Heart left ventricle (tissue), 16 donors: ENCODE measurements at regions of chr21 and their contacts with region 1.

Region 1: DNA sequence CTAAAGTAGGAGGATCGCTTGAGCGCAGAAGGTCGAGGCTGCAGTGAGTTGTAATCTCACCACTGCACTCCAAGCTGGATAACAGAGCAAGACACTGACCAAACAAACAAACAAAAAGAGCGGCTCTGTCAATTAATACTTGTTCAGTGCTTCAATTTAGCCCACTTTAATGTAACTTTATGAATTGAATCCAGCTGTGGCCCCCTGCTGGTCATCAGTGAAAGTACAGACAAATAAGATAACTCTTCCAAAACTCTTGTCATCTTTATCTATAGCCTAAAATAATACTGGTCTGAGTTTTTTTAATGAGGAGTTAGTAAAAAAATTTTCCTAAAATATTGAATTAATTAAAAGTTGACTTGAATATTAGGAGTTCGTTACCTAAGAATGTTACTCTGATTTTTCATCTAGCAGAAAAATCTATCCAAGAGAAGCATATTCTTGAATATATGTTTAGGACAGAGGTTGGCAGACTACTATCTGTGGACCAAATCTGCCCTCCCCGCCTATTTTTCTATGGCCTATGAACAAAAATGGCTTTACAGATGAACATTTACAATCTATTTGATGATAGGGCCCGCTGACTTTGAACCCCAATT is 26.1 kb downstream of the ATP5PF start:
- DNase-seq: peak in 2 of 5 donors; percentile 37 to 39
- ATAC-seq: no peak
- H3K4me3 ChIP-seq: no peak overlapping the region
- H3K27ac ChIP-seq: peak overlapping the region in 1 of 12 donors; percentile 4
- H3K4me1 ChIP-seq: peaks cover 0 to 14% (median 3%) of the 10 kb centered on the region in 12 donors
- H3K27me3 ChIP-seq: no peaks in the 10 kb centered on the region
- CTCF ChIP-seq: peak; percentile 72 to 94 (median 88)
- POLR2A ChIP-seq: no peak

Region 2: GRCh38 chr21:25657140-25657539 is 51.4 kb before region 1 on chr21:
- intact Hi-C with region 1: loop called in 1 of 10 experiments (anchors 10 kb)
- DNase-seq: no peak
- ATAC-seq: no peak
- H3K4me3 ChIP-seq: no peak overlapping the region
- H3K27ac ChIP-seq: no peak overlapping the region
- H3K4me1 ChIP-seq: peaks cover 0 to 13% (median 0%) of the 10 kb centered on the region in 12 donors
- H3K27me3 ChIP-seq: no peaks in the 10 kb centered on the region
- CTCF ChIP-seq: no peak
- POLR2A ChIP-seq: no peak

Region 3: DNA sequence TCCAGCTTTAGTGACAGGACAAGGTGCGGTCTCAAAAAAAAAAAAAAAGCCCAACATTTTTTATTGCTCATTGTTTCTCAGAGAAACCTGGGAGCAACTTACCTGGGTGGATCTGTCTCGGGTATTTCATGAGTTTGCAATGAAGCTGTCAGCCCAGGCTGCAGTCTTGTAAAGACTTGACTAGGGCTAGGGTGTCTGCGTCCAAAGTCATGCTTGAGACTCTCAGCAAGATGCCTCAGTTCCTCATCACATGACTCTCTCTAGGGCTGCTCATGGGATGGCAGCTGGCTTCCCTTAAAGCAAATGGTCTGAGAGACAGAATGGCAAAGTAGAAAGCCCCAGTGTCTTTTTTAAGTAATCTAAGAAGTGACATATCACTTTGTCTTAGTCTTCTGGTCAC is 34.3 kb after region 1 on chr21:
- intact Hi-C with region 1: no loop called
- DNase-seq: no peak
- ATAC-seq: no peak
- H3K4me3 ChIP-seq: no peak overlapping the region
- H3K27ac ChIP-seq: no peak overlapping the region
- H3K4me1 ChIP-seq: peaks cover 0 to 7% (median 2%) of the 10 kb centered on the region in 12 donors
- H3K27me3 ChIP-seq: no peaks in the 10 kb centered on the region
- CTCF ChIP-seq: no peak
- POLR2A ChIP-seq: no peak